ENCODE measurements at regions of chr1 and their contacts with region 1.

Region 1: GRCh38 chr1:45303582-45304310 is 22.9 kb upstream of the HPDL start:
- DNase-seq: peak; percentile 93 to 97 (median 95)
- H3K4me3 ChIP-seq: peak overlapping the region; percentile 61 to 88 (median 84)
- H3K4me3 Mint-ChIP-seq: peak overlapping the region; percentile 89 to 92
- H3K27ac ChIP-seq: peak overlapping the region; percentile 86 to 88
- H3K27ac Mint-ChIP-seq: peak overlapping the region; percentile 93 to 98 (median 96)
- H3K4me1 ChIP-seq: peaks cover 15 to 18% of the 10 kb centered on the region in 2 donors
- H3K4me1 Mint-ChIP-seq: peaks cover 10% of the 10 kb centered on the region
- H3K27me3 ChIP-seq: no peaks in the 10 kb centered on the region
- H3K27me3 Mint-ChIP-seq: peaks cover 0 to 5% (median 5%) of the 10 kb centered on the region in 3 donors
- CTCF ChIP-seq: peak; percentile 71

Region 2: DNA sequence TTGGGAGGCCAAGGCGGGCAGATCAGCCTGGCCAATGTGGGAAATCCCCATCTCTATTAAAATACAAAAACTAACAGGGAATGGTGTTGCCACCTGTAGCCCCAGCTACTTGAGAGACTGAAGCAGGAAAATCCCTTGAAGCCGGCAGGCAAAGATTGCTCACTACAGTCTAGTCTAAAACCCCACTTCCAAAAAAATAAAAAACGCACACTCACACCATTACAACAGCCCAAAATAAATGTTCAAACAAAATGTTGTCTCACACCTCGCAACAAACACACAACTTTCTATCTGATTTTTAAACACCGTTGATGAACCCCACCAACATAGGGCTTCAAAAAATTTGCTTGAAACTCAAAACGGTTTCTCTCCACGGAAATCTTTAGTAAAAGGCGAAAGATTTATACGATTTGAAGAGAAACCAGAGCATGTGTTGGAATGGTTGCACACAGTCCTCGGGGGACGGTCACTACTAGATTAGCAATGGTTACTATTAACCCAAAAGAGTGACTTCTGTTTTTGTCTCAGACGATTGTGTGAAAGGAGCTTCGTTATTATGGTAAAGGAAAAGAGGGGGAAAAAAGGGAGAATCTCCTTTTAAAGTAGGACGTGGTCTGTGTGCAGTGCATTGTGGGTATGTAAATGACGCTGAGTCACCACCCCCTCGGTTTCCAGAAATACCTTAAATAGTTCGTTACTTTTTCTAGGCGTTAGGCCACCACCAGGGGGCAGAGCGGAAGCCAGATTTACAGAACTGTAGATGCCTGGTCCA is 572.8 kb before region 1 on chr1 and contains the start of gene RNU5D-1:
- intact Hi-C with region 1: loop called in 1 of 2 experiments (anchors 5 kb)
- DNase-seq: peak; percentile 93 to 98 (median 97)
- H3K4me3 ChIP-seq: peak within 1 kb of the TSS; percentile 29 to 54 (median 40)
- H3K4me3 Mint-ChIP-seq: peak within 1 kb of the TSS; percentile 32 to 82
- H3K27ac ChIP-seq: peak within 1 kb of the TSS; percentile 75 to 100
- H3K27ac Mint-ChIP-seq: peak within 1 kb of the TSS; percentile 99 to 100 (median 100)
- H3K4me1 ChIP-seq: peaks cover 37 to 40% of the 10 kb centered on the region in 2 donors
- H3K4me1 Mint-ChIP-seq: peaks cover 45% of the 10 kb centered on the region
- H3K27me3 ChIP-seq: no peaks in the 10 kb centered on the region
- H3K27me3 Mint-ChIP-seq: peaks cover 0 to 5% (median 0%) of the 10 kb centered on the region in 3 donors
- CTCF ChIP-seq: peak; percentile 90
- polyA plus RNA-seq, gene RNU5D-1: not detected

Region 3: DNA sequence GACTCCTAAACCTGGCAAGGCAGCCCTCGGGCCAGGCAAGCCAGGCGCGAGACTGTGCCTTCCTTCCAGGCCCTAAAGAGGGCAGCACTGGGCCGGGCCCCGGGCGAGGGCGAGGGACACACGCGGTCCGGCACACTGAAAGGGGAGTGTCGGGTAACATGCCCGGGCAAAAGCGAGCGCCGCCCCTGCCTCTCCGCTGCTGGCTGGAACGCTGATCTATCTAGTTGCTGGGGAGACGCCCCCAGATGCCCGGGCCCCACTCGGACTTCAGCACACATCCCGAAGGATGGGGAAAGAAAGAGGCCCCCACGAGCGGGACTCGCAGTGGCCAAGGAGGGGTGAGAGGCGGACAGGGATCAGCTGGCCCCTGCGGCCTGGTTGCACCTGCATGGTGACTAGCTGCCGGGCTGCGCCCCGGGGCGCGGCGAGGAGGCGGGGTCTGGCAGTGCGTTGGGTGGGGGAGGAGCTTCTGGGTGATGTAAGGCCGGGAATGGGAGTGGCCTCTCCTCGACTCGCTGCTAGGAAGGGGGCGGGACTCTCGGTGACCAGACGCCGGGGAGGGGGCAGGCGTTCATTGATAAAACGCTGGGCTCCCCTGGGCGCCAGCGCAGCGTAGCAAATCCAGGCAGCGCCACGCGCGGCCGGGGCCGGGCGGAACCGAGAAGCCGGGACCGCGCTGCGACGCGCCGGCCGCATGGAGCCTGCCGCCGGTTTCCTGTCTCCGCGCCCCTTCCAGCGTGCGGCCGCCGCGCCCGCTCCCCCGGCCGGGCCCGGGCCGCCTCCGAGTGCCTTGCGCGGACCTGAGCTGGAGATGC is 503.8 kb before region 1 on chr1 and contains the start of gene PLK3:
- intact Hi-C with region 1: loop called in 1 of 2 experiments (anchors 10 kb)
- DNase-seq: peak; percentile 97 to 99 (median 99)
- H3K4me3 ChIP-seq: peak within 1 kb of the TSS; percentile 60 to 99 (median 76)
- H3K4me3 Mint-ChIP-seq: peak within 1 kb of the TSS; percentile 94 to 98
- H3K27ac ChIP-seq: peak within 1 kb of the TSS; percentile 90 to 95
- H3K27ac Mint-ChIP-seq: peak within 1 kb of the TSS; percentile 98 to 100 (median 99)
- H3K4me1 ChIP-seq: peaks cover 29 to 38% of the 10 kb centered on the region in 2 donors
- H3K4me1 Mint-ChIP-seq: peaks cover 20% of the 10 kb centered on the region
- H3K27me3 ChIP-seq: no peaks in the 10 kb centered on the region
- H3K27me3 Mint-ChIP-seq: peaks cover 1 to 9% (median 4%) of the 10 kb centered on the region in 3 donors
- CTCF ChIP-seq: peak; percentile 90
- polyA plus RNA-seq, gene PLK3: 15.8 to 285 (median 28.1) TPM

Region 4: DNA sequence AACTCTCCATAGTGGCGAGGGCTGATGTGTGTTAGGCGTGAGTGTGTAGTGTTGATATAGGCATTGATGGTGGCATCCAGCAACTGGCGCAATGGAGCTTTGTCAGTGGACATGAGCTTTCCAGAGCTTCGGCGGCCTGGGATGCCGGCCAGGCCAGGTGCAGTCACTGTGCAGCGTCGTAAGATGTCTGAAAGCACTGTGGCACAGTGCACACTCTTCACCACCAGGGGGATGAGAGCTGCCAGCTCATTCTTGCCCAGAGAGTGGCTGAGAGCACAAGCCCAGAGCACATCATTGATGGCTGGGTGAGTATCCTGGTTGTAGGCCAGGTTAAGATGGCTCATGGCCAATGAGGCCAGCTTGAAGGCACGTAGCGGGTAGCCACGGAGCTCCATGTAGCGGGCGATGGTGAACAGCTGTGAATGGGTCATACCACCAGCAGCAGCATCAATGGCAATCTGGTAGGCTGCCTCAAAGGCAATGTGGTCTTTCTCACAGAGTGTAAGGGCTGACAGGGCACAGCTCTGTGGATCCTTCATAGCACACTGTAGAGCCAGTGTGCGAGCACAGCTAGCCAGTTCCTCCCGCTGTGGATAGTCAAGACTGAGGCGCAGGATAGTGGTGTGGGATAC is 285.0 kb before region 1 on chr1:
- intact Hi-C with region 1: loop called (anchors 1 to 2 kb)
- DNase-seq: peak in 2 of 3 donors; percentile 29 to 31
- H3K4me3 ChIP-seq: no peak overlapping the region
- H3K4me3 Mint-ChIP-seq: no peak overlapping the region
- H3K27ac ChIP-seq: no peak overlapping the region
- H3K27ac Mint-ChIP-seq: no peak overlapping the region
- H3K4me1 ChIP-seq: peaks cover 0 to 9% of the 10 kb centered on the region in 2 donors
- H3K4me1 Mint-ChIP-seq: peaks cover 21% of the 10 kb centered on the region
- H3K27me3 ChIP-seq: no peaks in the 10 kb centered on the region
- H3K27me3 Mint-ChIP-seq: peaks cover 2 to 4% (median 2%) of the 10 kb centered on the region in 3 donors
- CTCF ChIP-seq: peak; percentile 75

Region 5: DNA sequence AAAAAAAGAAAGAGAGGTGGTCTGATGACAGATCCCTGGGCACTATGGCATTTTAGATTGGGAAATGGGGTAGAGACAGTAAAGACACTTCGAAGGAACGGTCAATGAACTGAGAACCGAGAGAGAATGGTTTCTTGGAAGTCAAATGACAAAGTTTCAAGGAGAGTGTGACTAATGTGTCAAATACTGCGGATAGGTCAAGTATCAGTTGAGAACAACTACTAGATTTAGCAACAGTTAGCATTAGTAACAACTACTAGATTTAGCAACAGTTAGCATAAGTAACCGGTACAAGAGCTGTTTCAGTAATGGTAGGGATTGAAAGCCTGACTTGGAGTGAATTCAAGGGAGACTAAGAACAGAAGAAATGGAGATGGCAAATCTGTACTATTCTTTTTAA is 256.7 kb before region 1 on chr1:
- intact Hi-C with region 1: no loop called
- DNase-seq: no peak
- H3K4me3 ChIP-seq: no peak overlapping the region
- H3K4me3 Mint-ChIP-seq: no peak overlapping the region
- H3K27ac ChIP-seq: no peak overlapping the region
- H3K27ac Mint-ChIP-seq: no peak overlapping the region
- H3K4me1 ChIP-seq: no peaks in the 10 kb centered on the region
- H3K4me1 Mint-ChIP-seq: peaks cover 7% of the 10 kb centered on the region
- H3K27me3 ChIP-seq: no peaks in the 10 kb centered on the region
- H3K27me3 Mint-ChIP-seq: no peaks in the 10 kb centered on the region
- CTCF ChIP-seq: no peak

Region 6: GRCh38 chr1:45339789-45340570 is 36.2 kb after region 1 on chr1 and contains the starts of genes MUTYH and TOE1:
- intact Hi-C with region 1: no loop called
- DNase-seq: peak; percentile 79 to 86 (median 79)
- H3K4me3 ChIP-seq: peak within 1 kb of the TSS; percentile 64 to 94 (median 85)
- H3K4me3 Mint-ChIP-seq: peak within 1 kb of the TSS; percentile 99 to 100
- H3K27ac ChIP-seq: peak within 1 kb of the TSS; percentile 94 to 99
- H3K27ac Mint-ChIP-seq: peak within 1 kb of the TSS; percentile 94 to 99 (median 96)
- H3K4me1 ChIP-seq: peaks cover 34 to 36% of the 10 kb centered on the region in 2 donors
- H3K4me1 Mint-ChIP-seq: peaks cover 39% of the 10 kb centered on the region
- H3K27me3 ChIP-seq: no peaks in the 10 kb centered on the region
- H3K27me3 Mint-ChIP-seq: peaks cover 0 to 5% (median 0%) of the 10 kb centered on the region in 3 donors
- CTCF ChIP-seq: no peak
- polyA plus RNA-seq, gene MUTYH: 6.7 to 22.9 (median 8.1) TPM
- polyA plus RNA-seq, gene TOE1: 3.9 to 8.1 (median 5.8) TPM

Region 7: GRCh38 chr1:45583264-45583665 is 279.5 kb after region 1 on chr1:
- intact Hi-C with region 1: loop called in 1 of 2 experiments (anchors 5 kb)
- DNase-seq: peak; percentile 97 to 99 (median 97)
- H3K4me3 ChIP-seq: peak overlapping the region; percentile 74 to 99 (median 97)
- H3K4me3 Mint-ChIP-seq: peak overlapping the region; percentile 98 to 99
- H3K27ac ChIP-seq: peak overlapping the region; percentile 83 to 84
- H3K27ac Mint-ChIP-seq: peak overlapping the region; percentile 94 to 98 (median 97)
- H3K4me1 ChIP-seq: peaks cover 40 to 42% of the 10 kb centered on the region in 2 donors
- H3K4me1 Mint-ChIP-seq: peaks cover 39% of the 10 kb centered on the region
- H3K27me3 ChIP-seq: no peaks in the 10 kb centered on the region
- H3K27me3 Mint-ChIP-seq: peaks cover 0 to 2% (median 0%) of the 10 kb centered on the region in 3 donors
- CTCF ChIP-seq: no peak

Measured in CD14-positive monocyte (primary cell).